Psoas muscle (tissue), 8 donors: ENCODE measurements at regions of chr5 and their contacts with region 1.

Region 1: DNA sequence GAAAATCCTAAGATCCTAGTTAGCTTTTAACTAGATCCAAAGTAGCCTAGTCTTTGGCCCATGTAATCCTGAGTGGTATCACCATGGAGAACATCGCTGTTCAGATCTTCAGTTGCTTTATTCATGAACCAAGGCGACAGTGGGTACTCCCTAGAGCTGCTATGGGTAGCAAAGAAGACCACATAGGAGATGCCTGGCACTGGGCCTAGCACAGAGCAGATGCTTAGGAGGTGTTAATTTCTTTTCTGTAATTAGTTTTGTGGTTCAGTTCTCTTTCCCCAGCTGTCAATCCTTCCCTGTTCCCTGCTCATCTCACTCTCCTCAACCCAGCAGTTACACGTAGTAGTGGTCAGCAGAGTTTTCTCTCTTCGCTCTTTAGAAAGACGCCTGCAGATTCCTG is 9.3 kb downstream of the CAST start:
- DNase-seq: no peak
- ATAC-seq: no peak
- H3K4me3 ChIP-seq: no peak overlapping the region
- H3K27ac ChIP-seq: no peak overlapping the region
- H3K4me1 ChIP-seq: peaks cover 10% of the 10 kb centered on the region
- H3K27me3 ChIP-seq: no peaks in the 10 kb centered on the region
- CTCF ChIP-seq: no peak

Region 2: GRCh38 chr5:96344678-96345577 is 326.5 kb before region 1 on chr5:
- intact Hi-C with region 1: loop called in 1 of 2 experiments (anchors 10 kb)
- DNase-seq: no peak
- ATAC-seq: peak; percentile 89 to 97 (median 92)
- H3K4me3 ChIP-seq: no peak overlapping the region
- H3K27ac ChIP-seq: no peak overlapping the region
- H3K4me1 ChIP-seq: peaks cover 4% of the 10 kb centered on the region
- H3K27me3 ChIP-seq: no peaks in the 10 kb centered on the region
- CTCF ChIP-seq: peak; percentile 66